ENCODE measurements at regions of chr20 and their contacts with region 1.

Region 1: GRCh38 chr20:50189681-50190582 is 698 bp upstream of the CEBPB start:
- DNase-seq: peak; percentile 96 to 100
- H3K4me3 ChIP-seq: peak overlapping the region; percentile 96
- H3K4me3 Mint-ChIP-seq: peak overlapping the region; percentile 94
- H3K27ac Mint-ChIP-seq: peak overlapping the region; percentile 99
- H3K4me1 ChIP-seq: peaks cover 49% of the 10 kb centered on the region
- H3K4me1 Mint-ChIP-seq: peaks cover 54% of the 10 kb centered on the region
- H3K27me3 ChIP-seq: no peaks in the 10 kb centered on the region
- H3K27me3 Mint-ChIP-seq: no peaks in the 10 kb centered on the region
- CTCF ChIP-seq: peak; percentile 99

Region 2: GRCh38 chr20:50273618-50274491 is 83.9 kb after region 1 on chr20:
- CTCF ChIA-PET with region 1: interaction called, 6 read pairs
- POLR2A ChIA-PET with region 1: interaction called, 10 read pairs
- intact Hi-C with region 1: loop called (anchors 2 kb)
- DNase-seq: no peak
- H3K4me3 ChIP-seq: no peak overlapping the region
- H3K4me3 Mint-ChIP-seq: no peak overlapping the region
- H3K27ac Mint-ChIP-seq: no peak overlapping the region
- H3K4me1 ChIP-seq: peaks cover 32% of the 10 kb centered on the region
- H3K4me1 Mint-ChIP-seq: peaks cover 20% of the 10 kb centered on the region
- H3K27me3 ChIP-seq: no peaks in the 10 kb centered on the region
- H3K27me3 Mint-ChIP-seq: no peaks in the 10 kb centered on the region
- CTCF ChIP-seq: no peak

Region 3: DNA sequence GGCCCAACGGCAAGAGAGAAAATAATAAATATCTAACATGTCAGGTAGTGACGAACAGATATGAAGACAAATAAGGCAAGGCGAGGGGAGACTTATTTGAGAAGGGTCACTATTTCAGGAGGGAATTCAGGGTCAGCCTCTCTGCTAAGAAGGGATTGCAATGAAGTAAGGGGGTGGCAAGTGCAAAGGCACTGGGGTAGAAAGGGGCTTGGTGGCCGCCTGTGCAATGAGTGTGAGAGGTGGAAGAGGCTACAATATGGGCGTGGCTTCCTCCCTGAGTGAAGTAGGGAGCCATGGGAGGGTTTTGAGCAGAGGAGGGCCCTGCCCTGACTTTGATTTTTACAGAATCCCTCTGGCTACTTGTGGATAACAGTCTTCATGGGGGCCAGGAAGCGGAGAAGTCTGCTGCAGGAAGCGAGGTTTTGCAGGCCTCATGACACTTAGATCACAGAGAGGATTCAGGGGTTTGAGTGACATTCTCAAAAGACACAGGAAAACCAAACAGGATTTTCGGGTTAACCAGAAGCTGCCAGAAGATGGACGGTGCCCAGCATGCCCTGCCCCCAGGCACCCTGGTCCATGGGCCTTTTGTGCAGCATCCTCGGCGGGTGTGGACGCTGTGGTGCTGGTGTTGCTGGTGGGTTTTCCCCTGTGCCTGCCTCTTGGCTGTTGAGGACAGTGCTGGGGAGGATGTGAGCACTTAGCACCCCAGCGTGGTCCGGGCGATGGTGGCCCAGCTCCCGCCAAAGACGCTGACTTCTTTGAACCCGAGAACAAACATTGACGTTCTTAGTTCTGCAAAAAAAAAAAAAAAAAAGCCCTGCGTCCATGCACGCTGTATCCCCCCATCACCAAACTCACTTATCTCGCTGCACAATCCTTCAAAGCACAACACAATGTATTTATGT is 196.1 kb after region 1 on chr20:
- CTCF ChIA-PET with region 1: interaction called, 6 read pairs
- POLR2A ChIA-PET with region 1: no interaction called
- intact Hi-C with region 1: loop called (anchors 5 kb)
- DNase-seq: no peak
- H3K4me3 ChIP-seq: no peak overlapping the region
- H3K4me3 Mint-ChIP-seq: no peak overlapping the region
- H3K27ac Mint-ChIP-seq: peak overlapping the region; percentile 10
- H3K4me1 ChIP-seq: peaks cover 59% of the 10 kb centered on the region
- H3K4me1 Mint-ChIP-seq: peaks cover 61% of the 10 kb centered on the region
- H3K27me3 ChIP-seq: no peaks in the 10 kb centered on the region
- H3K27me3 Mint-ChIP-seq: no peaks in the 10 kb centered on the region
- CTCF ChIP-seq: no peak

Region 4: GRCh38 chr20:50460460-50461267 is 270.7 kb after region 1 on chr20:
- CTCF ChIA-PET with region 1: interaction called, 31 read pairs
- POLR2A ChIA-PET with region 1: interaction called, 5 read pairs
- intact Hi-C with region 1: loop called (anchors 1 kb)
- DNase-seq: peak; percentile 93 to 96
- H3K4me3 ChIP-seq: no peak overlapping the region
- H3K4me3 Mint-ChIP-seq: no peak overlapping the region
- H3K27ac Mint-ChIP-seq: peak overlapping the region; percentile 34
- H3K4me1 ChIP-seq: peaks cover 33% of the 10 kb centered on the region
- H3K4me1 Mint-ChIP-seq: peaks cover 31% of the 10 kb centered on the region
- H3K27me3 ChIP-seq: no peaks in the 10 kb centered on the region
- H3K27me3 Mint-ChIP-seq: no peaks in the 10 kb centered on the region
- CTCF ChIP-seq: peak; percentile 99 to 100

Region 5: DNA sequence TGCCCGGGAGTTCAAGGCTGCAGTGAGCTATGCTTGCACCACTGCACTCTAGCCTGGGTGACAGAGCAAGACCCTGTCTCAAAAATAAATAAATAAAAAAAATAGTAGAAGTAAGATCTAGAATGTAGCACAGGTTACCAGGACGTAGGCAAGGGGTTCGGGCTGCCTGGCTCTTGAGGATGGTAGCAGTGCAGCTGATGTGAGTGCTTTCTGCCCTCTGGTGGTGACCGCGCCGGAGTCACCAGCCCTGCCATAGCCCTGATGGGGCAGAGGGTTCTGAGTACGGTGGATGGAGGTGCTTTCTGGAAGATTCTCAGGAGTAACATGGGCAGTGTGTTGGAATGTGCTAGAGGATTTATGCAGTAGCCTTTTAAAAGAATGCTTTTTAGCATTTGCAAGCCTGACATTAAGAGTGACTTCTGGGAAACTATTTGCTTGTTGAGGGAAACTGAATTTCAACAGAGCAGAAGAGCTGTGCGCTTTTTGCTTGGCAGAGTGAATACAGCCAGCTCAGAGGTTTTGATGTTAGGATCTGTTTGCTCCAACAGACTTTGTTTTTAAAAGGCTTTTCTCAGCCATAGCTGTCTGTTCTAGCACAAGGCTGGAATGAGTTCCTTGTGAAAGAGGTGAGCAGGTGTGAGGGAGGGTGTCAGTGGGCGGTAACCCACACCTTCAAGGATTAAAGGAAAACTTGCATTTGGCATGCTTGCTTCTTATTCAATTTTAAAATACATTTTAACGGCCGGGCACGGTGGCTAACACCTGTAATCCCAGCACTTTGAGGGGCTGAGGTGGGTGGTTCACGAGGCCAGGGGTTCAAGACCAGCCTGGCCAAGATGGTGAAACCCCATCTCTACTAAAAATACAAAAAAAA is 386.2 kb after region 1 on chr20:
- CTCF ChIA-PET with region 1: interaction called, 7 read pairs
- POLR2A ChIA-PET with region 1: no interaction called
- intact Hi-C with region 1: loop called (anchors 1 kb)
- DNase-seq: peak; percentile 79 to 88
- H3K4me3 ChIP-seq: no peak overlapping the region
- H3K4me3 Mint-ChIP-seq: no peak overlapping the region
- H3K27ac Mint-ChIP-seq: no peak overlapping the region
- H3K4me1 ChIP-seq: no peaks in the 10 kb centered on the region
- H3K4me1 Mint-ChIP-seq: peaks cover 7% of the 10 kb centered on the region
- H3K27me3 ChIP-seq: no peaks in the 10 kb centered on the region
- H3K27me3 Mint-ChIP-seq: no peaks in the 10 kb centered on the region
- CTCF ChIP-seq: peak; percentile 97 to 99

Region 6: GRCh38 chr20:50929299-50930138 is 739.6 kb after region 1 on chr20:
- CTCF ChIA-PET with region 1: no interaction called
- POLR2A ChIA-PET with region 1: interaction called, 10 read pairs
- intact Hi-C with region 1: no loop called
- DNase-seq: peak; percentile 96 to 98
- H3K4me3 ChIP-seq: peak overlapping the region; percentile 96
- H3K4me3 Mint-ChIP-seq: peak overlapping the region; percentile 90
- H3K27ac Mint-ChIP-seq: peak overlapping the region; percentile 89
- H3K4me1 ChIP-seq: peaks cover 50% of the 10 kb centered on the region
- H3K4me1 Mint-ChIP-seq: peaks cover 56% of the 10 kb centered on the region
- H3K27me3 ChIP-seq: no peaks in the 10 kb centered on the region
- H3K27me3 Mint-ChIP-seq: no peaks in the 10 kb centered on the region
- CTCF ChIP-seq: peak; percentile 99